Panc1 (cell line): ENCODE measurements at regions of chr6 and their contacts with region 1.

Region 1: GRCh38 chr6:11595903-11596302 is 58.4 kb downstream of the TMEM170B start:
- DNase-seq: no peak
- ATAC-seq: no peak
- H3K4me3 ChIP-seq: no peak overlapping the region
- H3K27ac ChIP-seq: no peak overlapping the region
- H3K4me1 ChIP-seq: no peaks in the 10 kb centered on the region
- H3K27me3 ChIP-seq: no peaks in the 10 kb centered on the region
- CTCF ChIP-seq: peak; percentile 27; the same call in 1 of the 2 replicates

Region 2: GRCh38 chr6:12032783-12033573 is 437.1 kb after region 1 on chr6:
- CTCF ChIA-PET with region 1: no interaction called
- POLR2A ChIA-PET with region 1: interaction called, 14 read pairs
- in situ Hi-C with region 1: no loop called
- intact Hi-C with region 1: no loop called
- DNase-seq: no peak
- ATAC-seq: no peak
- H3K4me3 ChIP-seq: no peak overlapping the region
- H3K27ac ChIP-seq: no peak overlapping the region
- H3K4me1 ChIP-seq: no peaks in the 10 kb centered on the region
- H3K27me3 ChIP-seq: no peaks in the 10 kb centered on the region
- CTCF ChIP-seq: no peak